ENCODE measurements at regions of chr6 and their contacts with region 1.

Region 1: GRCh38 chr6:163554663-163555062 is 140.1 kb downstream of the QKI start:
- DNase-seq: peak; percentile 37 to 68 (median 44)
- H3K4me3 ChIP-seq: no peak overlapping the region
- H3K4me3 Mint-ChIP-seq: no peak overlapping the region
- H3K27ac ChIP-seq: no peak overlapping the region
- H3K27ac Mint-ChIP-seq: peak overlapping the region in 5 of 7 donors; percentile 4 to 62 (median 40)
- H3K4me1 ChIP-seq: no peaks in the 10 kb centered on the region
- H3K4me1 Mint-ChIP-seq: peaks cover 5 to 15% (median 11%) of the 10 kb centered on the region in 4 donors
- H3K27me3 ChIP-seq: no peaks in the 10 kb centered on the region
- H3K27me3 Mint-ChIP-seq: no peaks in the 10 kb centered on the region

Region 2: GRCh38 chr6:163419413-163420288 is 135.0 kb before region 1 on chr6:
- CTCF ChIA-PET with region 1: interaction called, 27 read pairs
- POLR2A ChIA-PET with region 1: interaction called, 3 read pairs
- intact Hi-C with region 1: loop called (anchors 1 kb)
- DNase-seq: no peak
- H3K4me3 ChIP-seq: no peak overlapping the region
- H3K4me3 Mint-ChIP-seq: peak overlapping the region in 1 of 8 donors; percentile 51
- H3K27ac ChIP-seq: no peak overlapping the region
- H3K27ac Mint-ChIP-seq: peak overlapping the region in 1 of 7 donors; percentile 61
- H3K4me1 ChIP-seq: peaks cover 43% of the 10 kb centered on the region
- H3K4me1 Mint-ChIP-seq: peaks cover 29 to 69% (median 46%) of the 10 kb centered on the region in 4 donors
- H3K27me3 ChIP-seq: no peaks in the 10 kb centered on the region
- H3K27me3 Mint-ChIP-seq: no peaks in the 10 kb centered on the region

Region 3: DNA sequence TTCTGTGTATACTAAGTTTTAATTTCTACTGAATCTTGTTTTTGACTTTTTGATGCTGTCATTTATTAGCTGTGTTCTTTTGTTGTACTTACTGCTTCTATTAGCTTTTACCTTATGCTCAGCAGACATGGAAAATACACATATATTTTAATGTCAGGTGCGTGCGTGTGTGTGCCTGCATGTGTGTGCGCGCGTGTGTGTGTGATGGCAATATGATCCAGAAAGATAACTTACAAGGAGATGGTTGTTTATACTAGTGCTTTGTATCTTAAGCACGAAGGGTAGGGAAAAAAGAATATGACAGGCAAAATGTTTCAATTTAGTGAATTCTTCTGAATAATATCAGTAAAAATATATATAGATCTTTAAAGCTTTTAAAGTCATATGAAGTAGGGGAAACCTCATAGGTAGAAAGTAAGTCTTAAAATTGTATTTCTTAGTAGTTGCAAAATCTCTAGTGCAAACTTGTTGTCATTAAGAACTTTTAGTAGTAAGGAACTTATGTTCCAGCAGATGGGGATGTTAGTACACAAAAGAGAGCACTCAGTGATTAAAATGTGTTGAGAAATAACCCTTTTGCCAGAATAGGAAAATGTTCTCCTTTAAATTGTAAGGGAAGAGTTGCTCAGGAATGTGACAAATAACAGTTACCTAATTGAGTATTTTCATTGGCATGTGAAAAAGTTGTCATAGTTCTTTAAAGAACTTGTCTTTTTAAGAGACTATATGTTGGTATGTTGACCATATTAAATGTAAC is 127.0 kb before region 1 on chr6:
- CTCF ChIA-PET with region 1: interaction called, 18 read pairs
- POLR2A ChIA-PET with region 1: no interaction called
- intact Hi-C with region 1: loop called (anchors 1 kb)
- DNase-seq: peak in 4 of 5 donors; percentile 12 to 31 (median 24)
- H3K4me3 ChIP-seq: no peak overlapping the region
- H3K4me3 Mint-ChIP-seq: no peak overlapping the region
- H3K27ac ChIP-seq: no peak overlapping the region
- H3K27ac Mint-ChIP-seq: no peak overlapping the region
- H3K4me1 ChIP-seq: peaks cover 32% of the 10 kb centered on the region
- H3K4me1 Mint-ChIP-seq: peaks cover 32 to 61% (median 48%) of the 10 kb centered on the region in 4 donors
- H3K27me3 ChIP-seq: no peaks in the 10 kb centered on the region
- H3K27me3 Mint-ChIP-seq: no peaks in the 10 kb centered on the region

Region 4: GRCh38 chr6:163494279-163494727 is 60.4 kb before region 1 on chr6:
- CTCF ChIA-PET with region 1: no interaction called
- POLR2A ChIA-PET with region 1: no interaction called
- intact Hi-C with region 1: no loop called
- DNase-seq: no peak
- H3K4me3 ChIP-seq: no peak overlapping the region
- H3K4me3 Mint-ChIP-seq: no peak overlapping the region
- H3K27ac ChIP-seq: no peak overlapping the region
- H3K27ac Mint-ChIP-seq: no peak overlapping the region
- H3K4me1 ChIP-seq: peaks cover 12% of the 10 kb centered on the region
- H3K4me1 Mint-ChIP-seq: peaks cover 21 to 41% (median 35%) of the 10 kb centered on the region in 4 donors
- H3K27me3 ChIP-seq: no peaks in the 10 kb centered on the region
- H3K27me3 Mint-ChIP-seq: no peaks in the 10 kb centered on the region

Region 5: DNA sequence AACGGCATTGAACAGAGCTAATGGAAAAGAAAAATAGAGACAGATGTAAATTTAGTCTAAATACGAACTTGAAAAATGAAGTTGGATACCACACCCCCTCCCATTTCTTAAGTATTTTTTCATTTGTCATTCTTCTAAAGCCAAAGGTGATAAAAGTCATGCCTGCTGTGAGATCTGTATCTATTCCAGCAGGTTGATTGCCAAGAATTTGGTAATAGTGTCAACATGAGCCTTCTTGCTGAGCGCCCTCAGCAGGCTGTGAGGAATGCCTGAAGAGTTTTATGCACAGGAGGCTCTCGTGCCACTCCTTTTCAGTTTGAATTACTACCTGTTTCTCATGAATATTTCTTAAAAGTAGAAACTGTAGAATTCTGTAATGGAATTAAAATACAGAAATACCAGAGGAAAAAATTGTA is 25.2 kb after region 1 on chr6:
- CTCF ChIA-PET with region 1: no interaction called
- POLR2A ChIA-PET with region 1: no interaction called
- intact Hi-C with region 1: no loop called
- DNase-seq: no peak
- H3K4me3 ChIP-seq: no peak overlapping the region
- H3K4me3 Mint-ChIP-seq: no peak overlapping the region
- H3K27ac ChIP-seq: no peak overlapping the region
- H3K27ac Mint-ChIP-seq: no peak overlapping the region
- H3K4me1 ChIP-seq: no peaks in the 10 kb centered on the region
- H3K4me1 Mint-ChIP-seq: peaks cover 0 to 5% (median 0%) of the 10 kb centered on the region in 4 donors
- H3K27me3 ChIP-seq: no peaks in the 10 kb centered on the region
- H3K27me3 Mint-ChIP-seq: peaks cover 0 to 1% of the 10 kb centered on the region in 2 donors